Activated naive CD4-positive, alpha-beta T cell treated with anti-CD3 and anti-CD28 coated beads for 36 hours (primary cell): ENCODE measurements at regions of chr2 and their contacts with region 1.

Region 1: DNA sequence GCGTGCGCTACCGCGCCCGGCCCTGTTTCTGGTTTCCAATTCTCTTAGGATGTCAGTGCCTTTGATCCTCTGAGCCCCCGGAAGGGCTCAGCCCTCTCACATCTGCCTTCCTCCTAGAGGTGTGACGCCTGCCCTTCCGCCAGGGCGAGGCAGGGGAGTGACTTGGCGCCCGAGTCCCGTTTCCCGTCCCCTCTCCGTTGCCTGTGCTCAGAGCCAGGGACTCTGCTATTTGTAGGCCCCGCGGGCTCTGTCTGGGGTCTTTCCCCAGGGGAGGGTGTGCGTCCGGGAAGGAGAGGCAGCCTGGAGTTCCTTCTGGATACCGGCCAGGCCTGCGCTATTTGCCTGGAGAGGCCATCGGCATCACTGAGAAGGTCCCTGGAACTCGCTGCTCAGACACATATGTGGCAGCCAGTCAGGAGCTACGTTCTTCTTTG is 103.7 kb upstream of the TAF1B start:
- DNase-seq: peak; percentile 75
- H3K4me3 Mint-ChIP-seq: peak overlapping the region; percentile 65
- H3K27ac Mint-ChIP-seq: peak overlapping the region; percentile 80
- H3K4me1 Mint-ChIP-seq: peaks cover 45% of the 10 kb centered on the region
- H3K27me3 Mint-ChIP-seq: no peaks in the 10 kb centered on the region

Region 2: GRCh38 chr2:9423100-9423921 is 316.2 kb before region 1 on chr2 and contains the starts of genes CPSF3 and ITGB1BP1:
- CTCF ChIA-PET with region 1: no interaction called
- intact Hi-C with region 1: loop called (anchors 5 kb)
- DNase-seq: peak; percentile 97
- H3K4me3 Mint-ChIP-seq: no peak within 1 kb of the TSS
- H3K27ac Mint-ChIP-seq: peak within 1 kb of the TSS; percentile 92
- H3K4me1 Mint-ChIP-seq: peaks cover 39% of the 10 kb centered on the region
- H3K27me3 Mint-ChIP-seq: no peaks in the 10 kb centered on the region
- total RNA-seq, gene CPSF3: 64.5 to 65.7 TPM
- total RNA-seq, gene ITGB1BP1: 97.2 to 97.4 TPM

Region 3: DNA sequence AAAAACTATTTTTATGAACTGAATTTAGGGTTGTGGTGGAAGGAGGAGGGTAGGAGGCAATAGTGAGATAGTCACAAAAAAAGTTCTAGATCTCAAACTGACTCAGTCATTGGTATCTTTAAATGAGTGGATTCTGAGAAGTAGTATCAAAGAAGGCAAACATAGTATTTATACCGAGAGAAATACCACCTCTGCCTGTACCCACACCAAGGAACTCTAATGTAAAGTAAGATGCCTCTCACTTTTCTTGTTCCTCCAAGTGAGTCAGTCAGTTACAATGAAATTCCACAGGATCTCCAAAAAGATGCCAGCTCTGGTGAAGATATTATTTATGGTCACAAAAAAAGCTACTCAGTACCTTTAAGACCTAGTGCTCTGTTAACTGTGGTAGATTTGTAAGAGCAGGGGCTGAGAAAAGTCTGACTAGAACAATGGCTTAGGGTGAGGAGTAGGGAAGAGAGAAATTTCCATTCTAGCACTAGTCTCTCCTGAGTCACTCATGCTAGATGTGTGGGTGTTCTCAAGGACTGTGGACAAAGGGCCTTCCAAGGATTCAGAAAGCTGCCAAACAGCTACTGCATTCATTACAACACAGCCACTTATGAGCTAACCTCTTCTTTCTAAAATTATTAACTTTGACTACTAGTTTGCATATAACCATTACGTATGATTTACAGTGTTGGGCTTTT is 145.0 kb before region 1 on chr2:
- CTCF ChIA-PET with region 1: no interaction called
- intact Hi-C with region 1: loop called (anchors 2 kb)
- DNase-seq: peak; percentile 21
- H3K4me3 Mint-ChIP-seq: peak overlapping the region; percentile 1
- H3K27ac Mint-ChIP-seq: peak overlapping the region; percentile 86
- H3K4me1 Mint-ChIP-seq: peaks cover 72% of the 10 kb centered on the region
- H3K27me3 Mint-ChIP-seq: no peaks in the 10 kb centered on the region

Region 4: DNA sequence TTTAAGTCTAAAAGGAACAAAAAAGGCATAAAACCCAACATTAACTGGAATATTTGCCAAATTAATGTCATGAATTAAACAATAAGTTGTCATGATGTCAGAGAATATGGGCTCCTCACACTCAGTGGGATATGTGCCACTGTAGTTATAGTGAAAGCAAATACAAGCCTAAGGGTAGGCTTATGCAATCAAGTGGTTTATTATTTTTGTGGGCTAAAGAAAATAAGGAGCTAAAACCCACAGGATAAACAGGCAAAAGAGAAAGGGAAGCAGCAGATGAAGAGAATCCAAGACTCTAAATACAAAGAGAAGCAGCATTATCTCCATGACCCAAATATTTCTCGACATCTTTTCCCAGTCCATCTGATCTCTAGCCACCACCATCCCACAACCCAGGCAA is 126.3 kb before region 1 on chr2:
- CTCF ChIA-PET with region 1: no interaction called
- intact Hi-C with region 1: loop called (anchors 5 kb)
- DNase-seq: no peak
- H3K4me3 Mint-ChIP-seq: no peak overlapping the region
- H3K27ac Mint-ChIP-seq: no peak overlapping the region
- H3K4me1 Mint-ChIP-seq: peaks cover 78% of the 10 kb centered on the region
- H3K27me3 Mint-ChIP-seq: no peaks in the 10 kb centered on the region

Region 5: GRCh38 chr2:9708683-9709538 is 30.6 kb before region 1 on chr2:
- CTCF ChIA-PET with region 1: no interaction called
- intact Hi-C with region 1: loop called (anchors 1 kb)
- DNase-seq: peak; percentile 37
- H3K4me3 Mint-ChIP-seq: no peak overlapping the region
- H3K27ac Mint-ChIP-seq: peak overlapping the region; percentile 56
- H3K4me1 Mint-ChIP-seq: peaks cover 35% of the 10 kb centered on the region
- H3K27me3 Mint-ChIP-seq: no peaks in the 10 kb centered on the region

Region 6: GRCh38 chr2:9778012-9778411 is 38.5 kb after region 1 on chr2:
- CTCF ChIA-PET with region 1: interaction called, 5 read pairs
- intact Hi-C with region 1: loop called (anchors 1 kb)
- DNase-seq: peak; percentile 42
- H3K4me3 Mint-ChIP-seq: no peak overlapping the region
- H3K27ac Mint-ChIP-seq: no peak overlapping the region
- H3K4me1 Mint-ChIP-seq: peaks cover 40% of the 10 kb centered on the region
- H3K27me3 Mint-ChIP-seq: no peaks in the 10 kb centered on the region